CD8-positive, alpha-beta memory T cell (primary cell): ENCODE measurements at regions of chr17 and their contacts with region 1.

Region 1: GRCh38 chr17:42405963-42406495 is 17.0 kb downstream of the CAVIN1 start:
- DNase-seq: peak; percentile 67 to 87 (median 74)
- H3K4me3 ChIP-seq: no peak overlapping the region
- H3K4me3 Mint-ChIP-seq: peak overlapping the region in 1 of 7 donors; percentile 78
- H3K27ac ChIP-seq: no peak overlapping the region
- H3K27ac Mint-ChIP-seq: peak overlapping the region in 2 of 8 donors; percentile 17 to 41
- H3K4me1 ChIP-seq: peaks cover 9% of the 10 kb centered on the region
- H3K4me1 Mint-ChIP-seq: peaks cover 6 to 11% (median 9%) of the 10 kb centered on the region in 3 donors
- H3K27me3 ChIP-seq: no peaks in the 10 kb centered on the region
- H3K27me3 Mint-ChIP-seq: peaks cover 0 to 2% of the 10 kb centered on the region in 2 donors

Region 2: DNA sequence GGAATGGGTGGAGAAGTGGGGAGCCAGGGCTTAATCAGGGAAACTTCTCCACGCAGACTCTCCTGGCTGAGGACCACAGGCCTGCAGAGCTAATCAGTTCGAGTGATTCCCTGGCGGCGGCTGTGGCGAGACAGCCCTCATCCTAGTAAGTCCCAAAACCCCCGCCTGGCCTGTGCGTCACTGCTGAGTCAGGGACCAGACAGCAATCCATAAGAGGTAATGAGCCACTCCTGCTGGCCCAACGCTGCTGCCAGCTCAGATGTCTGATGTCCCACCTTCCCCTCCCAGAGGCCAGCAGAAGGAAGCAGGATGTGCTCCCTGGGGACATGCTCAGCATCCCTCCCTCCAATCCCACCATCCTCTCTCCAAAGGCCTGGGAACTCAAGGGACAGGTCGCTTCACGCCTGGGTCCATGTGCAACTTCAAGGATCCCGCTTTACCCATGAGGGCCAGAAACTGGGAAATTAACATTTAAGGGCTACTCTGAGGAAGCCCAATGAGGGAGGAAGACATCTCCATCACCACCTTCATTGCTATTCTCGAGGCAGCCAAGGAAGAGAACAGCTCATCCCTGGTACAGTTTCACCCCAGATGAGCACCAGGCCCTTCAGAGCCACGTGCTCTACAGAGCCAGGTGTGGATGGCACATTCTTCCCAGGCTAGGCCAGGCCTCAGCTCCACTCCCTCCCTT is 495.2 kb before region 1 on chr17:
- CTCF ChIA-PET with region 1: no interaction called
- POLR2A ChIA-PET with region 1: no interaction called
- DNase-seq: no peak
- H3K4me3 ChIP-seq: no peak overlapping the region
- H3K4me3 Mint-ChIP-seq: no peak overlapping the region
- H3K27ac ChIP-seq: no peak overlapping the region
- H3K27ac Mint-ChIP-seq: no peak overlapping the region
- H3K4me1 ChIP-seq: peaks cover 1% of the 10 kb centered on the region
- H3K4me1 Mint-ChIP-seq: peaks cover 22 to 32% (median 29%) of the 10 kb centered on the region in 3 donors
- H3K27me3 ChIP-seq: no peaks in the 10 kb centered on the region
- H3K27me3 Mint-ChIP-seq: no peaks in the 10 kb centered on the region

Region 3: DNA sequence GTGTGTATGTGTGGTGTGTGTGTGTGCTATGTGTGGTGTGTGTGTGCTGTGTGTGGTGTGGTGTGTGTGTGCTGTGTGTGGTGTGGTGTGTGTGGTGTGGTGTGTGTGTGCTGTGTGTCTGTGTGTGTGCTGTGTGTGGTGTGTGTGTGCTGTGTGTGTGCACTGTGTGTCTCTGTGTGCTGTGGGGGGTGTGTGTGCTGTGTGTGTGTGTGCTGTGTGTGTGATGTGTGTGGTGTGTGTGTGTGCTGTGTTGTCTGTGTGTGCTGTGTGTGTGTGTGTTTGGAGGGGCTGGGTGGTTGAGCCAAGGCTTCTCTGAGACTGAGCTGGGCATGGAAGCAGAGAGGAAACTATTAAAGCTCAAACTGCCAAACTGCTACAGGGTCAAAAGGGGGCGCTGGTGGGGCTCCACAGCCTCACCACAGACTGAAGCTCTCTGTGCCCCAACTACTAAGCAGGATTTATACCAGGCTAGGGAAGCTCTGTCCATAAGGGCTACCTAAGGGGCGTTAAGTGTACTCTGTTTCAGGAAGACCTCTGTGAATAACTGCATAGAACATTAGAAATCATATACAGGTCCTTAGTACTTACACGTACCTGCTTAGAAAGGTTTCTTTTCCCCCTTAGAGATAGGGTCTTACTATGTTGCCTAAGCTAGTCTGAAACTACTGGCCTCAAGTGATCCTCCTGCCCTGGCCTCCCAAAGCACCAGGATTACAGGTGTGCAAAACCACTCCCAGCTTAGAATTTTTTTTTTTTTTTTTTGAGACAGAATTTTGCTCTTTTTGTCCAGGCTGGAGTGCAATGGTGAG is 183.9 kb before region 1 on chr17:
- CTCF ChIA-PET with region 1: interaction called, 13 read pairs
- POLR2A ChIA-PET with region 1: no interaction called
- DNase-seq: peak; percentile 15 to 68 (median 55)
- H3K4me3 ChIP-seq: no peak overlapping the region
- H3K4me3 Mint-ChIP-seq: no peak overlapping the region
- H3K27ac ChIP-seq: no peak overlapping the region
- H3K27ac Mint-ChIP-seq: peak overlapping the region in 7 of 8 donors; percentile 28 to 98 (median 77)
- H3K4me1 ChIP-seq: no peaks in the 10 kb centered on the region
- H3K4me1 Mint-ChIP-seq: peaks cover 0 to 8% (median 7%) of the 10 kb centered on the region in 3 donors
- H3K27me3 ChIP-seq: no peaks in the 10 kb centered on the region
- H3K27me3 Mint-ChIP-seq: peaks cover 0 to 2% of the 10 kb centered on the region in 2 donors

Region 4: DNA sequence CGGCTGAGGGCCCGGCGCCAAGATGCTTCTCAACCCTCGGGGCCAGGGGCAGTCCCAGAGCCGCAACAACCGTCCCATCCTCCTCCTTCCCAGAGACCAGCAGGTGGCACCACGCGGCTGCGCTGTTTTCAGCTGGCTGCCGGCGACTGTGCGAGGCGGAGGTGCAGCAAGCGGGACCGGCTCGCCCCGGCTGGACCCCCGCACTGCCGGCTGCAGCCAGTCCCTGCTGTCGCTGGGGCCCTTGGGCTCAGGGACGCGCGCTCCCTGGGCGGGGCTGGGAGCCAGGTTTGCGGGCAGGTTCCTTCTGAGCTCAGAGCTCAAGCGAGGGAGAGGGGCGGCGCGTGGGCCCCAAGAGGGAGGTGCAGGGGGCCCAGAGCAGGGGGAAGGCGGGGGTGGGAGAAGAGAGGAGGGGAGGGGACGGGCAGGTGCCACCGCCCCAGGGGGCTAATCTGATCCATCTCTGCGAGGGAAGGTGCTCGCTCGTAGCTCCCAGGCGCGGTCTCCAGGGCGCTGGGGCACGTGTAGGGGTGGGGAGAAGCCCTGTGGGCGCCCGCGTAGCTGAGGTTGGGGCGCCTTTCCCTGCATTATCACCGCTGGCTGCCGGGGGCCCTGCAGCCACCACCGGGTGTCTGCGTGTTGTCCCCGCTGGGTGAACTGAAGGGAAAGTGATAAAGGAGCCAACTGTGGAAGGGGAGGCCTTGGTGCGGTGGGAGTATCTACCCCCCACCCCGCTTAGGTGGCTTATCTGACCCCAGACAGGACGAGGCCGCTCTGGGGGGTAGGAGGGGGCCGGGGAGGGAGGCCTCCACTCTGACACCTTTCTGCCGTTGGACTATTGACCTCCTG is 93.5 kb before region 1 on chr17:
- CTCF ChIA-PET with region 1: interaction called, 373 read pairs
- POLR2A ChIA-PET with region 1: interaction called, 10 read pairs
- DNase-seq: peak; percentile 53 to 80 (median 62)
- H3K4me3 ChIP-seq: no peak overlapping the region
- H3K4me3 Mint-ChIP-seq: peak overlapping the region; percentile 45 to 79 (median 67)
- H3K27ac ChIP-seq: peak overlapping the region; percentile 45
- H3K27ac Mint-ChIP-seq: peak overlapping the region in 7 of 8 donors; percentile 55 to 92 (median 83)
- H3K4me1 ChIP-seq: peaks cover 56% of the 10 kb centered on the region
- H3K4me1 Mint-ChIP-seq: peaks cover 49 to 57% (median 53%) of the 10 kb centered on the region in 3 donors
- H3K27me3 ChIP-seq: no peaks in the 10 kb centered on the region
- H3K27me3 Mint-ChIP-seq: no peaks in the 10 kb centered on the region

Region 5: DNA sequence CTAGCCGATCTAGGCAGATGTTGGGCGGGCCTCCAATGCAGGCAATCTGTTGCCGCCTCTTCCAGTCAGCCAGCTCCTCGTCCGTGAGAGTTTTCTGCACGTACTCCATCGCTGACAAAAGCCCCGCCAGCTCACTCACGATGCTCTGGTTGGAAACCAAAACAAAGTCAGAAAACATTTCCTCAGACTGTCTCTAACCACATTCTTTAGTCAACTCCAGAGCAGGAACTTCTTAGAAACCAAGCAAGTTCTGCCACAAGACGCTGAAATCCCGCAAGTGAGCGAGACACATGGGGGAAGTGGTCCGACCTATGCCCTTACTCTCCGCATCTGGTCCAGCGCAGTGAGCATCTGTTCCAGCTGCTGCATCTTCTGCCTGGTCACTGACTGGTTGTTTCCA is 68.6 kb before region 1 on chr17:
- CTCF ChIA-PET with region 1: interaction called, 14 read pairs
- POLR2A ChIA-PET with region 1: interaction called, 5 read pairs
- DNase-seq: peak in 4 of 5 donors; percentile 30 to 81 (median 71)
- H3K4me3 ChIP-seq: no peak overlapping the region
- H3K4me3 Mint-ChIP-seq: peak overlapping the region; percentile 5 to 83 (median 68)
- H3K27ac ChIP-seq: no peak overlapping the region
- H3K27ac Mint-ChIP-seq: peak overlapping the region; percentile 83 to 98 (median 93)
- H3K4me1 ChIP-seq: peaks cover 35% of the 10 kb centered on the region
- H3K4me1 Mint-ChIP-seq: peaks cover 31 to 46% (median 43%) of the 10 kb centered on the region in 3 donors
- H3K27me3 ChIP-seq: no peaks in the 10 kb centered on the region
- H3K27me3 Mint-ChIP-seq: no peaks in the 10 kb centered on the region

Region 6: GRCh38 chr17:42472709-42473521 is 66.9 kb after region 1 on chr17:
- CTCF ChIA-PET with region 1: no interaction called
- POLR2A ChIA-PET with region 1: no interaction called
- DNase-seq: no peak
- H3K4me3 ChIP-seq: no peak overlapping the region
- H3K4me3 Mint-ChIP-seq: no peak overlapping the region
- H3K27ac ChIP-seq: no peak overlapping the region
- H3K27ac Mint-ChIP-seq: no peak overlapping the region
- H3K4me1 ChIP-seq: no peaks in the 10 kb centered on the region
- H3K4me1 Mint-ChIP-seq: peaks cover 0 to 6% (median 3%) of the 10 kb centered on the region in 3 donors
- H3K27me3 ChIP-seq: no peaks in the 10 kb centered on the region
- H3K27me3 Mint-ChIP-seq: no peaks in the 10 kb centered on the region

Region 7: GRCh38 chr17:42517516-42517915 is 111.5 kb after region 1 on chr17:
- CTCF ChIA-PET with region 1: interaction called, 12 read pairs
- POLR2A ChIA-PET with region 1: no interaction called
- DNase-seq: peak; percentile 69 to 85 (median 76)
- H3K4me3 ChIP-seq: no peak overlapping the region
- H3K4me3 Mint-ChIP-seq: no peak overlapping the region
- H3K27ac ChIP-seq: no peak overlapping the region
- H3K27ac Mint-ChIP-seq: peak overlapping the region in 2 of 8 donors; percentile 24 to 44
- H3K4me1 ChIP-seq: peaks cover 4% of the 10 kb centered on the region
- H3K4me1 Mint-ChIP-seq: peaks cover 2 to 7% (median 7%) of the 10 kb centered on the region in 3 donors
- H3K27me3 ChIP-seq: no peaks in the 10 kb centered on the region
- H3K27me3 Mint-ChIP-seq: peaks cover 0 to 2% of the 10 kb centered on the region in 2 donors

Region 8: DNA sequence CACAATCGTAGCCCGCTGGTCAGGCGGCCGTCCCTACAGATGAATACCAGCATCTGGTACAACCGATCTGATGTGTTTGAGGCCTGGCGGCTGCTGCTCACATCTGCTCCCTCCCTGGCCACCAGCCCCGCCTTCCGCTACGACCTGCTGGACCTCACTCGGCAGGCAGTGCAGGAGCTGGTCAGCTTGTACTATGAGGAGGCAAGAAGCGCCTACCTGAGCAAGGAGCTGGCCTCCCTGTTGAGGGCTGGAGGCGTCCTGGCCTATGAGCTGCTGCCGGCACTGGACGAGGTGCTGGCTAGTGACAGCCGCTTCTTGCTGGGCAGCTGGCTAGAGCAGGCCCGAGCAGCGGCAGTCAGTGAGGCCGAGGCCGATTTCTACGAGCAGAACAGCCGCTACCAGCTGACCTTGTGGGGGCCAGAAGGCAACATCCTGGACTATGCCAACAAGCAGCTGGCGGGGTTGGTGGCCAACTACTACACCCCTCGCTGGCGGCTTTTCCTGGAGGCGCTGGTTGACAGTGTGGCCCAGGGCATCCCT is 137.6 kb after region 1 on chr17:
- CTCF ChIA-PET with region 1: no interaction called
- POLR2A ChIA-PET with region 1: no interaction called
- DNase-seq: no peak
- H3K4me3 ChIP-seq: no peak overlapping the region
- H3K4me3 Mint-ChIP-seq: no peak overlapping the region
- H3K27ac ChIP-seq: no peak overlapping the region
- H3K27ac Mint-ChIP-seq: no peak overlapping the region
- H3K4me1 ChIP-seq: peaks cover 16% of the 10 kb centered on the region
- H3K4me1 Mint-ChIP-seq: peaks cover 14 to 24% (median 15%) of the 10 kb centered on the region in 3 donors
- H3K27me3 ChIP-seq: no peaks in the 10 kb centered on the region
- H3K27me3 Mint-ChIP-seq: no peaks in the 10 kb centered on the region

Region 9: GRCh38 chr17:42566883-42567573 is 161.0 kb after region 1 on chr17 and contains the start of gene MLX:
- CTCF ChIA-PET with region 1: no interaction called
- POLR2A ChIA-PET with region 1: no interaction called
- DNase-seq: peak; percentile 89 to 95 (median 91)
- H3K4me3 ChIP-seq: peak within 1 kb of the TSS; percentile 78
- H3K4me3 Mint-ChIP-seq: peak within 1 kb of the TSS; percentile 93 to 96 (median 95)
- H3K27ac ChIP-seq: peak within 1 kb of the TSS; percentile 66
- H3K27ac Mint-ChIP-seq: peak within 1 kb of the TSS; percentile 88 to 97 (median 94)
- H3K4me1 ChIP-seq: peaks cover 46% of the 10 kb centered on the region
- H3K4me1 Mint-ChIP-seq: peaks cover 31 to 53% (median 37%) of the 10 kb centered on the region in 3 donors
- H3K27me3 ChIP-seq: no peaks in the 10 kb centered on the region
- H3K27me3 Mint-ChIP-seq: no peaks in the 10 kb centered on the region
- total RNA-seq, gene MLX: 61.8 to 62.3 TPM